B cell (primary cell): ENCODE measurements at regions of chr14 and their contacts with region 1.

Region 1: GRCh38 chr14:100384819-100385813 is 62.0 kb downstream of the SLC25A47 start:
- DNase-seq: no peak
- ATAC-seq: no peak
- H3K4me3 ChIP-seq: no peak overlapping the region
- H3K4me3 Mint-ChIP-seq: no peak overlapping the region
- H3K27ac ChIP-seq: no peak overlapping the region
- H3K27ac Mint-ChIP-seq: no peak overlapping the region
- H3K4me1 ChIP-seq: peaks cover 0 to 2% of the 10 kb centered on the region in 2 donors
- H3K4me1 Mint-ChIP-seq: no peaks in the 10 kb centered on the region
- H3K27me3 ChIP-seq: no peaks in the 10 kb centered on the region
- H3K27me3 Mint-ChIP-seq: no peaks in the 10 kb centered on the region
- CTCF ChIP-seq: no peak

Region 2: DNA sequence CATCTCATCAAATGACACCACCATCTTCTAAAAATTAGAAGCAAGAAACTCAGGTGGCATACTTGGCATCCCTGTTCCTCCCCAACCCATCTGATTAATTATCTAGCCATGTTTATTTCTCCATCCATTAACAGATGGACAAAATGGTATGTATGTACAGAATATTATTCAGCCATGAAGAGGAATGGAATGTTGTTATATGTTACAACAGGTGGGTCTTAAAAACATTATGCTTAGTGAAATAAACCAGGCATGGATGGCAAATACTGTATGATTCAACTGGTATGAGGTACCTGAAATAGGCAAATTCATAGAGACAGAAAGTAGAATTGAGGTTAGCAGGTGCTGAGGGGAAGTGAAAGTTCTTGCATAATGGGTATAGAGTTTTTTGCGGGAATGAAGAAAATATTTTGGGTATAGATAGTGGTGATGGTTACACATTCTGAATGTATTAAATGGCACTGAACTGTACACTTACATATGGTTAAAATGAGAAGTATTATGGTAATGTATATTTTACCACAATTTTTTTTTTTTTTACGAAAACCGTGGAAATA is 128.7 kb before region 1 on chr14:
- CTCF ChIA-PET with region 1: no interaction called
- POLR2A ChIA-PET with region 1: interaction called, 13 read pairs
- intact Hi-C with region 1: no loop called
- DNase-seq: peak; percentile 63
- ATAC-seq: peak; percentile 72
- H3K4me3 ChIP-seq: no peak overlapping the region
- H3K4me3 Mint-ChIP-seq: peak overlapping the region; percentile 62
- H3K27ac ChIP-seq: peak overlapping the region; percentile 31 to 34
- H3K27ac Mint-ChIP-seq: peak overlapping the region; percentile 72
- H3K4me1 ChIP-seq: peaks cover 61% of the 10 kb centered on the region in 2 donors
- H3K4me1 Mint-ChIP-seq: peaks cover 69% of the 10 kb centered on the region
- H3K27me3 ChIP-seq: no peaks in the 10 kb centered on the region
- H3K27me3 Mint-ChIP-seq: no peaks in the 10 kb centered on the region
- CTCF ChIP-seq: no peak